Colonic mucosa (tissue), 4 donors: ENCODE measurements at regions of chr9 and their contacts with region 1.

Region 1: DNA sequence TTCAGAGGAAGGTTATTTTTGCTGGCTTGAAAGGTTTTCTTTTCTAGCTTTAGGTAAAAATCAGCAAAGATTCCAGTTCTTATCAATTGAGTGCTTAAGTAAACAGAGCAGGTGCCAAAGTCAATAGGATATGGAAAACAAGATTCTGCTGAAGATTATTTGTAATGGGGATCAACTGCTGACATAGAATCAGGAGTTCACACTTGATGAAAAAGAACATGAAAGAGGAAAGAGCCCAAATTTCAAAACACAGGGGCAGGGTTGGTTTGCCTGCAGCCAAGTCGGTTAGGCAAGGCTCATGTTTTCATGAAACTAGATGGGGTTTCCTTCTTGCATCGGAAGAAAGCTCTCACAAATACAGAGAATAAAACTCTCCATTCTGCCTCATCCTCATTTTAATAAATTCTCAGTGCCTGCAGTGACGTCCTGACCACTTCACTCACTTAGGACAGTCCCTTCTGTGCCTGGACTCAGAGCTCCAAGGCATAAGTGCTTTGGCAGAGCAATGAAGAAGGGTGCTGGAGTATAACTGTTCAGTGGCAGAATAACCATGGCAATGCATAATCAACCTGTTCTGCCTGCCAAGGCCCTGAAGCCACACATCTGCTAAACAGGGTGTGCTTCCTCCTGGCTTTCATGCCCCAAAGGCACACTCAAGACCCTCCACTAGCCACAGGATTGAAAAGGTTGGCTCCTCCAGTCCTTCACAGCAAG is 179.6 kb downstream of the GNAQ start:
- DNase-seq: no peak
- H3K4me3 ChIP-seq: no peak overlapping the region
- H3K27ac ChIP-seq: no peak overlapping the region
- H3K4me1 ChIP-seq: no peaks in the 10 kb centered on the region
- H3K27me3 ChIP-seq: no peaks in the 10 kb centered on the region
- CTCF ChIP-seq: no peak

Region 2: GRCh38 chr9:77927265-77927664 is 75.2 kb after region 1 on chr9:
- intact Hi-C with region 1: no loop called
- DNase-seq: no peak
- H3K4me3 ChIP-seq: no peak overlapping the region
- H3K27ac ChIP-seq: no peak overlapping the region
- H3K4me1 ChIP-seq: peaks cover 4% of the 10 kb centered on the region
- H3K27me3 ChIP-seq: no peaks in the 10 kb centered on the region
- CTCF ChIP-seq: no peak

Region 3: DNA sequence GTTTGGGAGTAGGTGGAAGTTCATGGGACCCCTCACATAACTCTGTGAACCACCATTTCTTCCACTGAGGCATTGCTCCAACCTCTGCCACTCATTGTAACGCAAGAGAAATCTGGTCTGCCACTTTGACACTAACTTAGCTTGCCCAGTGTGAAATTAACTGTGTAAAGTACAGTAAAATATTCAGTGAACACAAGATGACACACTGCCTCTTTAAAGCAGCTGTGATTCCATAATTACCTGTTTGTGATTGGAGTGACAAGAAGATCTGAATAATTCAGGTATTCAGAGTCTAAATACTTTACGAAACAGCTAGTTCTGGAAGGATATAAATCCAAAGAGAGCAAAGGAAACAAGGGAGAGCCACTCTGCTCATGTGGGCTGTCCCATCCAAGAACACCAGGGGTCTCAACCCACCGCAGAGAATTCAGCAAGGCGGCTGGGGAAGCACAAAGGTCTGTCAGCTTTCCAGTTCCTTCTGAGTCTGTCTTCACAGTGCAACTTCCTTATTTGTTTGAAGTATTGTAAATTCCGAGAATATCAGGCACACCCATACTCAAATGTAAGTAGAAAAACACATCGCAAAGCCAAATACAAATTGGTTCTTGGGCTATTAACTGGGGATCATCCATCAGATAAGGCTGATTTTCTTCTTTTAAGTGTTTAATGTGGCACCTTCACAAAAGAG is 92.7 kb after region 1 on chr9:
- intact Hi-C with region 1: loop called (anchors 10 kb)
- DNase-seq: peak; percentile 50
- H3K4me3 ChIP-seq: no peak overlapping the region
- H3K27ac ChIP-seq: peak overlapping the region; percentile 72
- H3K4me1 ChIP-seq: peaks cover 27% of the 10 kb centered on the region
- H3K27me3 ChIP-seq: no peaks in the 10 kb centered on the region
- CTCF ChIP-seq: no peak